H1 (cell line): ENCODE measurements at regions of chr22 and their contacts with region 1.

Region 1: DNA sequence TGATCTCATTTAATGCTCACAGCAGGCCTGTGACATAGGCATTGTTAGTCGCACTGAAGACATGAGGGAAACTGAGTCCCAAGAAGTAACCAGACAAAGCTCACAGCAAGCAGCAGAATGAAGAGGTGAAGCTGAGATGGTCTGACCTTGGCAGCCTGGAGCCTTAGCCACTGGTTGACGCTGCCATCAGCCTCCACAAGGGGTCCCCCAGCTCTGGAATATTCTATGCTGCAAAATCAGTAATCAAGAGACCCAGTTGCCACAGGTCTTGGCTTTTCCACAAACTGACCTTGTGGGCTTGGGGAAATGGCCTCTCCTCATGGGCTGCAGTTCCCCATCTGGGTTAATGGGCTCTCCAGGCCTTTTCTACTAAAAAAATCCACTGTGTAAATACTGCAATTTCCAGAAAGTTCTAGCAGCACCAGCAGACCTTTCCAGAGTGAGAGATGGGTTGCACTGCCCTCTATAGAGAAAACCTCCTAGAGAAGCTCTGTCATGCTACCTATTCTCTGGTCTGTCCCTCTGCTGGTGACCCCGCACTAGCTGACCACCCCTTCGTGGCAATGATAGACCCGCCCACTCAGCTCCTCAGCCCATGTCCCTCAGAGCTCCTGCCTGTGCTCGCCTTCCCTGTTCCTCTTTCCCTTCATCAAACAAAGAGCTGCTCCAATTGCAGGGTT is 22.6 kb upstream of the ISX start:
- DNase-seq: no peak
- H3K4me3 ChIP-seq: no peak overlapping the region
- H3K27ac ChIP-seq: no peak overlapping the region
- H3K4me1 ChIP-seq: peaks cover 0 to 3% (median 1%) of the 10 kb centered on the region in 4 experiments; a peak in 1 of 7 replicates
- H3K27me3 ChIP-seq: no peaks in the 10 kb centered on the region
- CTCF ChIP-seq: peak; percentile 46 to 59 (median 52)
- EP300 ChIP-seq: no peak
- POLR2A ChIP-seq: no peak
- RAD21 ChIP-seq: peak; percentile 55 to 64

Region 2: DNA sequence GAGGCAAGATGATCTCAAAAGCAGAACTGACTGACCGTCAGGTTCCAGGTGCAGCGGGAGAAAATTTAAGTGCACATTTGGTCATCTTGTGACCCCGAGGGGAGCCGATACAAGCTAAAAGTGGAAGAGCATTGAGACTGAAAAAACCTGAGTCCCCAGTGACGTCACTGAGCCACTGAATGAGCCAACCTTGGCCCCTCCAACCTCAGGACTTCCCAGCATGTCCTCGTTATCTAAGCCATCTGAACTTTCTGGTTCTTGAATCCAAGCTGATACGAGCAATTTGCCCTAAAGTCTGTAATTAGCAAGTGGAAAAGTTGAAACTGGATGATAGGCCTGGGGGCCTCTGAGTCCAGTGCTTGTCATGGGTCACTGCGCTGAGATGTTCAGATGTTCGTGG is 28.6 kb before region 1 on chr22:
- CTCF ChIA-PET with region 1: no interaction called
- POLR2A ChIA-PET with region 1: no interaction called
- DNase-seq: no peak
- H3K4me3 ChIP-seq: no peak overlapping the region
- H3K27ac ChIP-seq: no peak overlapping the region
- H3K4me1 ChIP-seq: no peaks in the 10 kb centered on the region
- H3K27me3 ChIP-seq: no peaks in the 10 kb centered on the region
- CTCF ChIP-seq: no peak
- EP300 ChIP-seq: no peak
- POLR2A ChIP-seq: no peak
- RAD21 ChIP-seq: no peak

Region 3: GRCh38 chr22:35056486-35056885 is 13.1 kb after region 1 on chr22:
- CTCF ChIA-PET with region 1: interaction called, 11 read pairs
- POLR2A ChIA-PET with region 1: no interaction called
- DNase-seq: no peak
- H3K4me3 ChIP-seq: no peak overlapping the region
- H3K27ac ChIP-seq: no peak overlapping the region
- H3K4me1 ChIP-seq: no peaks in the 10 kb centered on the region; a peak in 1 of 7 replicates
- H3K27me3 ChIP-seq: no peaks in the 10 kb centered on the region
- CTCF ChIP-seq: no peak
- EP300 ChIP-seq: no peak
- POLR2A ChIP-seq: no peak
- RAD21 ChIP-seq: no peak

Region 4: GRCh38 chr22:35116817-35117216 is 73.4 kb after region 1 on chr22:
- CTCF ChIA-PET with region 1: interaction called, 20 read pairs
- POLR2A ChIA-PET with region 1: no interaction called
- DNase-seq: no peak
- H3K4me3 ChIP-seq: no peak overlapping the region
- H3K27ac ChIP-seq: no peak overlapping the region
- H3K4me1 ChIP-seq: no peaks in the 10 kb centered on the region
- H3K27me3 ChIP-seq: no peaks in the 10 kb centered on the region
- CTCF ChIP-seq: peak in 2 of 3 experiments; percentile 50 to 57; a peak in 2 of 4 replicates
- EP300 ChIP-seq: no peak
- POLR2A ChIP-seq: no peak
- RAD21 ChIP-seq: no peak

Region 5: GRCh38 chr22:35140879-35141745 is 97.7 kb after region 1 on chr22:
- CTCF ChIA-PET with region 1: interaction called, 18 read pairs
- POLR2A ChIA-PET with region 1: no interaction called
- DNase-seq: peak; percentile 51 to 88
- H3K4me3 ChIP-seq: no peak overlapping the region
- H3K27ac ChIP-seq: no peak overlapping the region
- H3K4me1 ChIP-seq: no peaks in the 10 kb centered on the region
- H3K27me3 ChIP-seq: no peaks in the 10 kb centered on the region
- CTCF ChIP-seq: peak; percentile 75 to 81 (median 76)
- EP300 ChIP-seq: no peak
- POLR2A ChIP-seq: no peak
- RAD21 ChIP-seq: peak; percentile 88 to 92

Region 6: GRCh38 chr22:35231585-35232084 is 188.2 kb after region 1 on chr22:
- CTCF ChIA-PET with region 1: interaction called, 14 read pairs
- POLR2A ChIA-PET with region 1: no interaction called
- DNase-seq: peak; percentile 68 to 91
- H3K4me3 ChIP-seq: no peak overlapping the region
- H3K27ac ChIP-seq: no peak overlapping the region
- H3K4me1 ChIP-seq: peaks cover 0 to 3% (median 2%) of the 10 kb centered on the region in 4 experiments; a peak in 2 of 7 replicates
- H3K27me3 ChIP-seq: no peaks in the 10 kb centered on the region; a peak in 1 of 7 replicates
- CTCF ChIP-seq: peak; percentile 87 to 99 (median 98)
- EP300 ChIP-seq: no peak
- POLR2A ChIP-seq: no peak
- RAD21 ChIP-seq: peak; percentile 93 to 94